HepG2 (cell line): ENCODE measurements at regions of chr5 and their contacts with region 1.

Region 1: GRCh38 chr5:126370796-126371718 is 52.2 kb upstream of the GRAMD2B start:
- DNase-seq: peak; percentile 75
- ATAC-seq: peak; percentile 85
- H3K4me3 ChIP-seq: peak overlapping the region; percentile 55 to 85 (median 75)
- H3K27ac ChIP-seq: peak overlapping the region; percentile 87
- H3K4me1 ChIP-seq: peaks cover 65% of the 10 kb centered on the region
- H3K27me3 ChIP-seq: no peaks in the 10 kb centered on the region; a peak in 1 of 5 replicates
- CTCF ChIP-seq: peak; percentile 50
- EP300 ChIP-seq: no peak
- POLR2A ChIP-seq: peak; percentile 51 to 74; a peak in 3 of 4 replicates
- RAD21 ChIP-seq: peak; percentile 52; the same call in 1 of the 2 replicates

Region 2: DNA sequence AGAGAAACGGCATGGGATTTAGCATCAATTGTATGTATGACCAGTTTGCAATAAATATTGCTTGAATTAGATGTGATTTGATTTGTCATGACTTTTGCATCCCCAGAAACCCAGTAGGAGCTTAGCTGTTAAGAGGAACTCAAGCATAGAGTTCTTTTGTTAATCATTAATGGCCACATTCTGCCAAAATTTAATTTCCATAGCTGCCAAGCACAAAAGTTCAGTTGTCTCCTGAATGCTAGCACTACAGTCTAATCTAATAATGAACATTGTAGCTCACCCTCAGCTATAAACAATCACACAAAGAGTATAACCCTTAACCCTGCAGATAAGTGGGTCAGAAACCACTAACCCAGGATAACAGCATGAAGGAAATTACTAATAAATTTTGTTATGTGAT is 117.7 kb before region 1 on chr5:
- CTCF ChIA-PET with region 1: no interaction called
- POLR2A ChIA-PET with region 1: no interaction called
- in situ Hi-C with region 1: no loop called
- intact Hi-C with region 1: no loop called
- DNase-seq: no peak
- ATAC-seq: no peak
- H3K4me3 ChIP-seq: no peak overlapping the region
- H3K27ac ChIP-seq: no peak overlapping the region
- H3K4me1 ChIP-seq: no peaks in the 10 kb centered on the region
- H3K27me3 ChIP-seq: no peaks in the 10 kb centered on the region
- CTCF ChIP-seq: no peak
- EP300 ChIP-seq: no peak
- POLR2A ChIP-seq: no peak
- RAD21 ChIP-seq: no peak

Region 3: DNA sequence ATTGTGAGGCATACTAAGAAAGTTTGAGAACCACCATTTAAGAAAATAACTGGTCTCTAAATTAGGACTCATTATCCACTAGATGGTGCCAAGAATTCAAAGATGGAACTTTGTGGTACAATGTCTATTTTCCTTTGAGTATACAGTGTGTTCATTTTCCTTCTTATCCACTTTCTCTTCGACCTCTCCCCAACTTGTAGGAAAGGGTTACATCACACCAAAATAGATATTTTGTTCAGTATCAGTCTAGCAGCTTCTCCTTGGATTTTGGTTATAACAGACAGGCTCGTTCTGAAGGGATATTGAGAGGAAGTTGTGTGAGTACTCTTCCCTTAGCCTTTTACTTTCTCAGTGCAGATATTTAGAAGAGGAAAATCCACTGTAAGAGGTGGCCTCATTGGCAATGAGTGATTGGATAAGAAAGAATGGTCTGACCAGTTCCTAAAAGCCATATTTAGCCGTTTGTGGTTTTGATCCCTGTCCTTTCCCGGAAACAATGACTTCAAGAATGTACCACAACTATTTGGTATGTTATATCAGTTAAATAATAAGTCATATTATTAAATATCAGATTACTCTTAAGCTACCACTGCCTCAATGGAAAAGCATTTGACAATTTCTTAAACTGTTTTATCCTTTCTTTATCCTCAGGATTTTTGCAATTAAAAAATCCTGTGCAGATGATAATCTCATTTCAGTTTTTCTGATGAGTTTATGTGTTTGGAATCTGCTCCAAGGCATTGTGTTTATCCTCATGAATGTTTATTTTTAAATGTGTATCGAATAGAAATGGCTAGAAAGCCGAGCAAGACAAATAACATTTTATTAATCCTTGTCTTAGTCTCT is 16.8 kb before region 1 on chr5:
- CTCF ChIA-PET with region 1: interaction called, 3 read pairs
- POLR2A ChIA-PET with region 1: interaction called, 6 read pairs
- in situ Hi-C with region 1: no loop called
- intact Hi-C with region 1: loop called (anchors 2 kb)
- DNase-seq: peak; percentile 58
- ATAC-seq: peak; percentile 85
- H3K4me3 ChIP-seq: peak overlapping the region in 2 of 3 experiments; percentile 12 to 38; a peak in 3 of 6 replicates
- H3K27ac ChIP-seq: no peak overlapping the region
- H3K4me1 ChIP-seq: peaks cover 39% of the 10 kb centered on the region
- H3K27me3 ChIP-seq: no peaks in the 10 kb centered on the region; a peak in 1 of 5 replicates
- CTCF ChIP-seq: peak; percentile 83
- EP300 ChIP-seq: no peak
- POLR2A ChIP-seq: no peak
- RAD21 ChIP-seq: peak; percentile 67

Region 4: DNA sequence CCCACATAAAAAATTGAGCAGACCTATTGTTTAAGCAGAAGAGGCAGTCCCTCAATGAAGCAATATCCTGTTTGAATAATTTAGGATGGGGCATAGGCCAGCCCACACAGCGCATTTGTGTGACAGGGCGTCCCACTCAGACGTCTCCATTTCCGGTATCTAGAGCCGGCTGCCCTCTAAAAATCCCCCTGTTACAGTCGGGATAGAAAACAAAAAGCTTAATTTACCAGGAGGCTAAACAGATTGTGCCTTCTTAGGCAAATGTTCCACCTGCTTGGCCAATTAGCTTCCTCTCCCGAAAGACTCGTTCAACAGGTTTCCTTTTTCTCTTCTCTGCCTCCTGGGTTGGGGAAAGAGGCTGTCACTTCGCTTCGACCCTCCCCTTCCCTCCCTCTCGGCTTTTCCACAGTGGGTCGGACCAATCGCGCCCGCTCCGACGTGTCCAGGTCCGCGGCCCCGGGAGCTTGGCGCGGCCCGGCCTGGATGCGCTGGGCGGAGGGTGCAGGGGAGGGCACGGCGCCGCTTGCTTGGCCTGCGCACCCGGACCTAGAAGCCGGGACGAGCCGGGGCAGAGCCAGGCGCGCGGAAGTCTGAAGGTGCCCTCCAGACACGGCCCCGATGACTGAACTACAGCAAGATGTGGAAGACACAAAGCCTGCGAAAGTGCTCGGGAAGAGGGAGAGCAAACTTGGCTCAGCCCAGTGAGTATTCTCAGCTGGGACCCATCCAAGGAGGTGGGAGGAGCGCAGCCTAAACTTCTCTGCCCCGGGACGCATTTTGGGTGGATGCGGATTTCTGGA is 52.1 kb after region 1 on chr5 and contains the start of gene GRAMD2B:
- CTCF ChIA-PET with region 1: no interaction called
- POLR2A ChIA-PET with region 1: interaction called, 5 read pairs
- in situ Hi-C with region 1: no loop called
- intact Hi-C with region 1: loop called (anchors 5 kb)
- DNase-seq: peak; percentile 18
- ATAC-seq: peak; percentile 99
- H3K4me3 ChIP-seq: peak within 1 kb of the TSS; percentile 48 to 61 (median 48); a peak in 5 of 6 replicates
- H3K27ac ChIP-seq: peak within 1 kb of the TSS; percentile 9
- H3K4me1 ChIP-seq: no peaks in the 10 kb centered on the region
- H3K27me3 ChIP-seq: no peaks in the 10 kb centered on the region
- CTCF ChIP-seq: no peak
- EP300 ChIP-seq: no peak
- POLR2A ChIP-seq: 0 out of 4 replicates have a peak, but pooled peaks of 1 of the 2 experiments have one; percentile 36
- RAD21 ChIP-seq: no peak
- total RNA-seq, gene GRAMD2B: 8.1 and 8.8 TPM in 2 replicates

Region 5: GRCh38 chr5:126471875-126472537 is 100.9 kb after region 1 on chr5:
- CTCF ChIA-PET with region 1: no interaction called
- POLR2A ChIA-PET with region 1: interaction called, 24 read pairs
- in situ Hi-C with region 1: no loop called
- intact Hi-C with region 1: loop called (anchors 2 kb)
- DNase-seq: peak; percentile 78
- ATAC-seq: peak; percentile 94
- H3K4me3 ChIP-seq: peak overlapping the region in 1 of 3 experiments; percentile 20; a peak in 1 of 6 replicates
- H3K27ac ChIP-seq: peak overlapping the region; percentile 61
- H3K4me1 ChIP-seq: peaks cover 40% of the 10 kb centered on the region
- H3K27me3 ChIP-seq: no peaks in the 10 kb centered on the region
- CTCF ChIP-seq: no peak
- EP300 ChIP-seq: peak in 1 of 2 experiments; percentile 64; a peak in 2 of 4 replicates
- POLR2A ChIP-seq: no peak
- RAD21 ChIP-seq: no peak

Region 6: GRCh38 chr5:126544087-126544740 is 173.2 kb after region 1 on chr5:
- CTCF ChIA-PET with region 1: no interaction called
- POLR2A ChIA-PET with region 1: no interaction called
- in situ Hi-C with region 1: no loop called
- intact Hi-C with region 1: loop called (anchors 1 kb)
- DNase-seq: peak; percentile 58
- ATAC-seq: peak; percentile 86
- H3K4me3 ChIP-seq: no peak overlapping the region
- H3K27ac ChIP-seq: peak overlapping the region; percentile 60
- H3K4me1 ChIP-seq: peaks cover 26% of the 10 kb centered on the region
- H3K27me3 ChIP-seq: no peaks in the 10 kb centered on the region
- CTCF ChIP-seq: peak; percentile 79
- EP300 ChIP-seq: no peak
- POLR2A ChIP-seq: no peak
- RAD21 ChIP-seq: peak; percentile 57; the same call in 1 of the 2 replicates

Region 7: GRCh38 chr5:126776497-126777256 is 405.6 kb after region 1 on chr5 and contains the start of gene LMNB1:
- CTCF ChIA-PET with region 1: no interaction called
- POLR2A ChIA-PET with region 1: no interaction called
- in situ Hi-C with region 1: no loop called
- intact Hi-C with region 1: loop called (anchors 10 kb)
- DNase-seq: peak; percentile 92
- ATAC-seq: peak; percentile 85
- H3K4me3 ChIP-seq: peak within 1 kb of the TSS; percentile 88 to 97 (median 91)
- H3K27ac ChIP-seq: peak within 1 kb of the TSS; percentile 95
- H3K4me1 ChIP-seq: peaks cover 32% of the 10 kb centered on the region
- H3K27me3 ChIP-seq: no peaks in the 10 kb centered on the region; a peak in 1 of 5 replicates
- CTCF ChIP-seq: peak; percentile 15; the same call in 1 of the 2 replicates
- EP300 ChIP-seq: peak; percentile 7 to 29; a peak in 1 of 4 replicates
- POLR2A ChIP-seq: peak; percentile 60 to 78
- RAD21 ChIP-seq: peak; percentile 36
- total RNA-seq, gene LMNB1: 159 and 197 TPM in 2 replicates

Region 8: GRCh38 chr5:127030259-127031146 is 659.4 kb after region 1 on chr5 and contains the start of gene MARCHF3:
- CTCF ChIA-PET with region 1: no interaction called
- POLR2A ChIA-PET with region 1: no interaction called
- in situ Hi-C with region 1: no loop called
- intact Hi-C with region 1: loop called (anchors 10 kb)
- DNase-seq: peak; percentile 85
- ATAC-seq: peak; percentile 94
- H3K4me3 ChIP-seq: peak within 1 kb of the TSS; percentile 60 to 90 (median 88)
- H3K27ac ChIP-seq: peak within 1 kb of the TSS; percentile 78
- H3K4me1 ChIP-seq: peaks cover 54% of the 10 kb centered on the region
- H3K27me3 ChIP-seq: no peaks in the 10 kb centered on the region
- CTCF ChIP-seq: peak; percentile 46
- EP300 ChIP-seq: no peak
- POLR2A ChIP-seq: peak; percentile 89 to 90
- RAD21 ChIP-seq: peak; percentile 7; the same call in 1 of the 2 replicates
- total RNA-seq, gene MARCHF3: 9.0 and 11.9 TPM in 2 replicates